A549 (cell line): ENCODE measurements at regions of chr12 and their contacts with region 1.

Region 1: DNA sequence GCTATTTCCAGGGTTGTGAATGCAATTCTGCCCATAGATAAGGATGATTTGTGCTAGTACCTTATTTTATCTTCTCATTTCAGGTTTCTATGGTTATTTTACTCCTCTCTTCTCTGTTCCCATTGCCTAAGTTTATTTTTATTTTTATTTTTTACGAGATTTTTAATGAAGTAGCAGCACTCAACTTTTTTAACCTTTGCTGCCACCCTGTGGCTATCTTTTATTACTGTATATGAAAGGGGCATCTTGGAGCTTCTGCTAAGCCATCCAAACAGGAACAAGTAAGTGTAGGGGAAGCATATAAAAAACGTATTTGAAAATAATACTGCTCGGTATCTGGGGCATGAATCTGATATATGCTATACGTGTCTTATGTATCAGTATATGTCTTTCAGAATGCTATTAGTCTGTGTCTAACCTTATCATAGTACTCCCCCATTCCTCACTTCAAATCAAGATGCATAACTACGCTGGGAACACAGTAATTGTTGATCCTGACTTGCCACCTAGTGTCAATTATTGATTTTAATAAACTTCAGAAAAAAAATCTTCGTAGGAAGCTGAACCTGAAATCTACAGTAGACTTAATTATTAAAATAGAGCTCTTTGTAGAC is 60.3 kb downstream of the KLRG1 start:
- DNase-seq: peak; percentile 34 to 57
- ATAC-seq: peak; percentile 70 to 91; a peak in 3 of 6 replicates
- H3K4me3 ChIP-seq: no peak overlapping the region
- H3K27ac ChIP-seq: no peak overlapping the region
- H3K4me1 ChIP-seq: no peaks in the 10 kb centered on the region
- CTCF ChIP-seq: peak; percentile 79
- EP300 ChIP-seq: no peak
- POLR2A ChIP-seq: no peak
- RAD21 ChIP-seq: peak; percentile 68 to 71

Region 2: GRCh38 chr12:8662593-8662992 is 387.0 kb before region 1 on chr12 and contains the start of gene MFAP5:
- CTCF ChIA-PET with region 1: interaction called, 30 read pairs
- POLR2A ChIA-PET with region 1: no interaction called
- DNase-seq: no peak
- ATAC-seq: 0 out of 6 replicates have a peak, but pooled peaks of 1 of the 2 experiments have one; percentile 36
- H3K4me3 ChIP-seq: no peak within 1 kb of the TSS
- H3K27ac ChIP-seq: no peak within 1 kb of the TSS
- H3K4me1 ChIP-seq: no peaks in the 10 kb centered on the region; the same call in 2 of the 3 replicates
- CTCF ChIP-seq: no peak
- EP300 ChIP-seq: no peak
- POLR2A ChIP-seq: no peak
- RAD21 ChIP-seq: no peak
- polyA plus RNA-seq, gene MFAP5: 0.40 and 0.48 TPM in 2 replicates

Region 3: DNA sequence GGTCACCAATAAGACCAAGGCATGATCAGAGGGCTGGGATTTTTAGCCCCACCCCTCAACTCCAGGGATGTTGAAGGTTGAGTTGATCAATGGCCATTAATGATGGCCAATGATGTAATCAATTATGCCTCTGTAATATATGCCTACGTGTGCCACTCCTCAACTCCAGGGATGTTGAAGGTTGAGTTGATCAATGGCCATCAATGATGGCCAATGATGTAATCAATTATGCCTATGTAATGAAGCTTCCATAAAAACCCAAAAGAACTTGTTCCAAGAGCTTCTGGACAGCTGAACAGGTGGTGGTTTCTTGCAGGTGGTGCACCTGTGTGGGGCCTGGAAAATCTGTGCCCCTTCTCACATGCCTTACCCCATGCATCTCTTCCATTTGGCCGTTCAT is 27.0 kb before region 1 on chr12:
- CTCF ChIA-PET with region 1: interaction called, 10 read pairs
- POLR2A ChIA-PET with region 1: interaction called, 3 read pairs
- DNase-seq: no peak
- ATAC-seq: no peak
- H3K4me3 ChIP-seq: no peak overlapping the region
- H3K27ac ChIP-seq: no peak overlapping the region
- H3K4me1 ChIP-seq: no peaks in the 10 kb centered on the region
- CTCF ChIP-seq: no peak
- EP300 ChIP-seq: no peak
- POLR2A ChIP-seq: no peak
- RAD21 ChIP-seq: no peak

Region 4: DNA sequence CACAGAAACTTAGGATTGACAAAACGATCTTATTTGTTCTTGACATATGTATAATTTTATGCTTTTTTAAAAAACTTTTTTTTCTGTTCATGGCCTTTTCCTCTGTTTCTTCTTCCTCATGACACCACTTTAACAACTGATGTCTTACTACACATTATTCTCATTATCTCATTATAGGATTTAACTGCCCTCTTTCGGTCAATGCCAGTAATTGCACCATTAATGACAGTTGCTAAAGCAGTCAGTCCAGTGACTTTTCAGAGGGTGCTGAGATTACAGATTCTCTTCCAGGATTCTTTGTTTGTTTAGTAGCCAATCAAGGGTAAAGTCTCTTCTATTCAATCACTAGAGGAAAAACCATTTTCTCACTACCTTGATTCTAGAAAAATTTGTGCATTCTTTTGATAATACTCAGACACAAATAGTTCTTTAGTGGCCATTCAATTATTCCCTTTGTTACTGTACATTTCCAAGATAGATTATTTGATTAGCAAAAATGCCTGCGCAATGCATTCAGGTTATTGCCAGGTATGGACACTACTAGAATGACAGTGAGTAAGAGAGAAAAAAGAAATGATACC is 10.1 kb before region 1 on chr12:
- CTCF ChIA-PET with region 1: interaction called, 17 read pairs
- POLR2A ChIA-PET with region 1: no interaction called
- DNase-seq: peak; percentile 58 to 78
- ATAC-seq: peak; percentile 77 to 88; a peak in 4 of 6 replicates
- H3K4me3 ChIP-seq: no peak overlapping the region
- H3K27ac ChIP-seq: no peak overlapping the region
- H3K4me1 ChIP-seq: no peaks in the 10 kb centered on the region
- CTCF ChIP-seq: peak; percentile 82
- EP300 ChIP-seq: no peak
- POLR2A ChIP-seq: no peak
- RAD21 ChIP-seq: peak; percentile 79 to 82

Region 5: DNA sequence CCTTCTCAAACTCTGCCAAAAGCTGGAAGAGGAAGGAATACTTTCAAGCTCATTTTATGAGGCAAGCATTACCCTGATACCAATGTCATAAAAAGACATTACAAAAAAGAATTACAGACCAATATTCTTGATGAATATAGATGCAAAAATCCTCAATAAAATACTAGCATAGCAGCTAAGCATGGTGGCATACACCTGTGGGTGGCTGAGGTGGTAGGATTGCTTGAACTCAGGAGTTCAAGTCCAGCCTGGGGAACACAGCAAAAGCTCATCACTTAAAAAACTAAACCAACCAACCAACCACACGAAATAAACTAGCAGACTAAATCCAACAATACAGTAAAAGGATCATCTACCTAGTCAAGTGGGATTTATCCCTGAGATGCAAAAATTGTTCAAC is 36.5 kb after region 1 on chr12:
- CTCF ChIA-PET with region 1: no interaction called
- POLR2A ChIA-PET with region 1: no interaction called
- DNase-seq: no peak
- ATAC-seq: no peak
- H3K4me3 ChIP-seq: no peak overlapping the region
- H3K27ac ChIP-seq: no peak overlapping the region
- H3K4me1 ChIP-seq: no peaks in the 10 kb centered on the region
- CTCF ChIP-seq: no peak
- EP300 ChIP-seq: no peak
- POLR2A ChIP-seq: no peak
- RAD21 ChIP-seq: no peak

Region 6: GRCh38 chr12:9149372-9149771 is 99.7 kb after region 1 on chr12:
- CTCF ChIA-PET with region 1: no interaction called
- POLR2A ChIA-PET with region 1: no interaction called
- DNase-seq: peak in 1 of 2 experiments; percentile 10
- ATAC-seq: no peak
- H3K4me3 ChIP-seq: no peak overlapping the region
- H3K27ac ChIP-seq: no peak overlapping the region
- H3K4me1 ChIP-seq: no peaks in the 10 kb centered on the region
- CTCF ChIP-seq: no peak
- EP300 ChIP-seq: no peak
- POLR2A ChIP-seq: no peak
- RAD21 ChIP-seq: no peak